ENCODE measurements at regions of chr2 and their contacts with region 1.

Region 1: GRCh38 chr2:207166039-207166348 is 246 bp upstream of the KLF7 start:
- DNase-seq: peak; percentile 95
- ATAC-seq: peak; percentile 98
- H3K4me3 Mint-ChIP-seq: peak overlapping the region; percentile 78
- H3K27ac Mint-ChIP-seq: peak overlapping the region; percentile 81
- H3K4me1 Mint-ChIP-seq: peaks cover 33% of the 10 kb centered on the region
- H3K27me3 Mint-ChIP-seq: peaks cover 69% of the 10 kb centered on the region

Region 2: DNA sequence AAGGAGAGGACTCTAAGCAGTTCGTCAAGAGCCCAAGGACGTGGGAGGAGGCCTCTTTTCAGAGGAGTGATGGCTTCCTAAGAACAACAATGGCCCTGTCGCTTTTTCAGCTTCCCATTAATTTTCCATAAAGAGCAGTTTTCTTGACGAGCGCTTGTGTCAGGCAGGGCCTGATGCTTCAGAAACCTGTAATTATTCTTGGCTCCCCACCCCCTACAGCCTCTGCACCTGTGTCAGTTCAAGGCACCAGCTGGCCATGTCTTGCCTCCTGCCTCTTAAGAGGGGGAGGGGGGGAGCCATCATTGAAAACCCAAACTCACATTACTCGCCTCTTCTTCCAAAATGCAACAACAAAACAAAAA is 32.6 kb before region 1 on chr2:
- CTCF ChIA-PET with region 1: no interaction called
- DNase-seq: no peak
- ATAC-seq: no peak
- H3K4me3 Mint-ChIP-seq: no peak overlapping the region
- H3K27ac Mint-ChIP-seq: no peak overlapping the region
- H3K4me1 Mint-ChIP-seq: peaks cover 2% of the 10 kb centered on the region
- H3K27me3 Mint-ChIP-seq: peaks cover 3% of the 10 kb centered on the region

Region 3: DNA sequence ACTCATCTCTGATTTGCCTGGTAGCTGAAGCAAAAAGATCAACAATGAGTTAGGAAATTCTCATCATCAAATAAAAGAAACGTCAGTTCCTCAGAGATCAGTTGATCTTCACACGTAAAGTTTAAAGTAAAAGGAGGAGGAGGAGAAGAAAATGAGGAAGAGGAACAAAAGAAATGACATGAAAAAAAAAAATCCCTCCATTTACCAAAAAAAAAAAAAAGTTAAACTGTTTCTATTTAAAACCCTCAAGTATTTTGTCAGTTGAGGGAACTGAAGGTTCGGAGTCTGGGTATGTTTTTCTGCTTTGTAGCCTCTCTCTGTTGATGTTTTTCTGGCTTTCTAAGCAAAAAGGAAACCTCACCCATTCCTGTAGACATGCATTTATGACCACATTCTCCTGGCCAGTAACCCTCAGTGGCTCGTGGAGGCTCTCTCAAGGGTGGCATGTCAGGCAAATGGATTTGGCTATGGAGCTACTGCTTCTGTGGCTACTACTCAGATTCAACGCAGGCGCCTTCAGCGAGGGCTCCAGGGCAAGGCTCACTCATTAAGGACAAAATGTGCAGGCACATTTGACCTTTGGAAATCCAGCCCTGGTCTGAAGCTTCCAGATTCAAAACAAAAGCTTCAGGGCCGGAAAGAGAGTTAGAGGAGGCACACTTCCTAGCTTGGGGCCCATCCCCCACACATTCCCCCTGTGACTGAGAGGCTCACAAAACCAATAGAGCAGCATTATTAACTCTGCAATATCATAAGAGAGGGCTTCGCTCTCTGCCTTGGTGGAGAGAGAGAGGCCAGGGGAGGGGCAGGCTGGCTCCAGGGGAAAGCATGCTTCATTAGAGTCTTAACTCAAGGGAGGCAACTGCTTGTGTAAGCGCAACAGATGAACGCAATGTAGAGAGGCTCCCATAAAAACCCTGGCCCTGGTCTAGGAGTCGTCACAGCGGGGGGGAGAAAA is 22.5 kb before region 1 on chr2:
- CTCF ChIA-PET with region 1: interaction called, 20 read pairs
- DNase-seq: peak; percentile 59
- ATAC-seq: peak; percentile 71
- H3K4me3 Mint-ChIP-seq: peak overlapping the region; percentile 16
- H3K27ac Mint-ChIP-seq: peak overlapping the region; percentile 79
- H3K4me1 Mint-ChIP-seq: peaks cover 29% of the 10 kb centered on the region
- H3K27me3 Mint-ChIP-seq: peaks cover 28% of the 10 kb centered on the region

Region 4: DNA sequence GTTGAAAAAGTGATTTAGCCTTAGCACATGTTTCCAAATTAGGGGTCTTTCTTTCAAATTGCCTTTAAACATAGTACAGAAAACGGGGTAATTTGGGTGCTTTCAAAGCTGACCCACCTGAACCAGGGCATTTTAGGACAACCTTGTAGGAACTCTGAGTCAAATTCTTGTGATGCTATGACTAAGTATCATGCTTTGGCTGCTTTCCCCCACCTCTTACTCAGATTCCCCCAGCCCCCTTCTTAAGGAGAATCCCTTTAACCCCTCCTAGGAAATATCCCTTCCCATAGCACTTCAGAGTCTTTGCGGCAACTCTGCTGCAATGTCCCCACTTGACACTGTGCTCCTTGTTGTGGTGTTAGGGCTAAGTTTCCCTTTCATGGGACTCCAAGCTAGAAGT is 18.4 kb after region 1 on chr2:
- CTCF ChIA-PET with region 1: no interaction called
- DNase-seq: no peak
- ATAC-seq: no peak
- H3K4me3 Mint-ChIP-seq: no peak overlapping the region
- H3K27ac Mint-ChIP-seq: no peak overlapping the region
- H3K4me1 Mint-ChIP-seq: no peaks in the 10 kb centered on the region
- H3K27me3 Mint-ChIP-seq: peaks cover 21% of the 10 kb centered on the region

Region 5: DNA sequence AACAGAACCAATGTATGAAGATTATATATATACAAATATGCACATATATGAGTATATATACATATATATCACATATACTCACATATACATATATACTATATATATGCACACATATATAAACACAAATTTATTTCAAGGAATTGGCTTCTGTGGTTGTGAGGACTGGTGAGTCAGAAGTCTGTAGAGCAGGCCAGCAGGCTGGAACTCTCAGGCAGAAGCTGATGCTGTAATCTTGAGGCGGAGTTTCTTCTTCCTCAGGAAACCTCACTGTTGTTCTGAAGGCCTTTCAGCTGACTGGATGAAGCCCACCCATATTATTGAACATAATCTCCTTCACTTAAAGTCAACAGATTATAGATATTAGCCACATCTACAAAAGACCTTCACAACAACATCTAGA is 219.9 kb after region 1 on chr2:
- CTCF ChIA-PET with region 1: no interaction called
- DNase-seq: no peak
- ATAC-seq: no peak
- H3K4me3 Mint-ChIP-seq: no peak overlapping the region
- H3K27ac Mint-ChIP-seq: no peak overlapping the region
- H3K4me1 Mint-ChIP-seq: peaks cover 2% of the 10 kb centered on the region
- H3K27me3 Mint-ChIP-seq: peaks cover 3% of the 10 kb centered on the region